Activated CD8-positive, alpha-beta T cell treated with anti-CD3 and anti-CD28 coated beads for 36 hours (primary cell): ENCODE measurements at regions of chr1 and their contacts with region 1.

Region 1: DNA sequence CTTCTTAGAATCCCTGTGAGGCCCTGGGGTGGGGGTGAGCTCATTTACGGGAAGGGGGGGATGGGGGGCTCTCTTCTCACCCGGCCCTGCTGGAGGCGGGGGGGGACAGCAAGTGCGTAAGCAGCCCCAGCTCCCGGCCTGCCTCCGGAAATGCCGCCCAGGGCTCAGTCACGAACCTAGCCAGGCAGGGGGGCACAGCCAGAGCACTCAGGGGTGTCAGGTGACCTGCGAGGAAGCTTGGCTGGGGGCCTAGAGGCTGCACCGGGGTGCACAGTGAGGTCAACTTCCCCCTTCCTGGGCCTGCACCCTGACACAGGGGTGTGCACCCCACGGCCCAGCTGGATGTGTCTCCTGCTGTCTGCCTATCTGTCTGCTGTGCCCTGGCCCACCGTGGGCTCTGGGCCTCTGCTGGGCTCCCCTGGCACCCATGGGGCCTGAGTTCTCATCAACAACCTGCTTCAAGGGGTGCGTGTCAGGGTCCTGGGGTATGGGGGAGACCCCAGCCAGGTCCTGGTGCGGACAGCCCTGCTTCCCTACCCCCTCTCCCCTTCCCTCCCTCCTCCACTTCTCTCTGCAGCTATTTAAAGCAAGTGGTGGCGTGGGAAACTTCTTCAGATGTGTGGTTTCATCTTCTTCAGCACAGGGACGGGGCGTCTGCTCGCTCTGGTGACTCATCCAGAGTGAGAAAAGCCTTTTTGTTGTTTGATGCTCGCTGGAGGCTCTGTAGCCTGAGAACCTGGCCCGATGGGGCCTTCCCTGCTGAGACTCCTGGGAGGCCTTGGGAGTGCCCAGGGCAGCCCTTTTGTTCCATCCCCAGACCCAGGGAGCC is 92.5 kb upstream of the RUNX3 start:
- DNase-seq: peak; percentile 99
- ATAC-seq: peak; percentile 84
- H3K4me3 Mint-ChIP-seq: peak overlapping the region; percentile 75
- H3K27ac Mint-ChIP-seq: peak overlapping the region; percentile 94
- H3K4me1 Mint-ChIP-seq: peaks cover 91% of the 10 kb centered on the region
- H3K27me3 Mint-ChIP-seq: no peaks in the 10 kb centered on the region
- CTCF ChIP-seq: no peak

Region 2: GRCh38 chr1:24978383-24979032 is 44.1 kb before region 1 on chr1:
- CTCF ChIA-PET with region 1: interaction called, 3 read pairs
- POLR2A ChIA-PET with region 1: interaction called, 12 read pairs
- intact Hi-C with region 1: no loop called
- DNase-seq: no peak
- ATAC-seq: peak; percentile 55
- H3K4me3 Mint-ChIP-seq: peak overlapping the region; percentile 12
- H3K27ac Mint-ChIP-seq: peak overlapping the region; percentile 59
- H3K4me1 Mint-ChIP-seq: peaks cover 72% of the 10 kb centered on the region
- H3K27me3 Mint-ChIP-seq: no peaks in the 10 kb centered on the region
- CTCF ChIP-seq: no peak

Region 3: GRCh38 chr1:24987875-24988557 is 34.6 kb before region 1 on chr1:
- CTCF ChIA-PET with region 1: interaction called, 5 read pairs
- POLR2A ChIA-PET with region 1: interaction called, 120 read pairs
- intact Hi-C with region 1: no loop called
- DNase-seq: peak; percentile 83
- ATAC-seq: peak; percentile 76
- H3K4me3 Mint-ChIP-seq: no peak overlapping the region
- H3K27ac Mint-ChIP-seq: peak overlapping the region; percentile 82
- H3K4me1 Mint-ChIP-seq: peaks cover 95% of the 10 kb centered on the region
- H3K27me3 Mint-ChIP-seq: no peaks in the 10 kb centered on the region
- CTCF ChIP-seq: no peak

Region 4: DNA sequence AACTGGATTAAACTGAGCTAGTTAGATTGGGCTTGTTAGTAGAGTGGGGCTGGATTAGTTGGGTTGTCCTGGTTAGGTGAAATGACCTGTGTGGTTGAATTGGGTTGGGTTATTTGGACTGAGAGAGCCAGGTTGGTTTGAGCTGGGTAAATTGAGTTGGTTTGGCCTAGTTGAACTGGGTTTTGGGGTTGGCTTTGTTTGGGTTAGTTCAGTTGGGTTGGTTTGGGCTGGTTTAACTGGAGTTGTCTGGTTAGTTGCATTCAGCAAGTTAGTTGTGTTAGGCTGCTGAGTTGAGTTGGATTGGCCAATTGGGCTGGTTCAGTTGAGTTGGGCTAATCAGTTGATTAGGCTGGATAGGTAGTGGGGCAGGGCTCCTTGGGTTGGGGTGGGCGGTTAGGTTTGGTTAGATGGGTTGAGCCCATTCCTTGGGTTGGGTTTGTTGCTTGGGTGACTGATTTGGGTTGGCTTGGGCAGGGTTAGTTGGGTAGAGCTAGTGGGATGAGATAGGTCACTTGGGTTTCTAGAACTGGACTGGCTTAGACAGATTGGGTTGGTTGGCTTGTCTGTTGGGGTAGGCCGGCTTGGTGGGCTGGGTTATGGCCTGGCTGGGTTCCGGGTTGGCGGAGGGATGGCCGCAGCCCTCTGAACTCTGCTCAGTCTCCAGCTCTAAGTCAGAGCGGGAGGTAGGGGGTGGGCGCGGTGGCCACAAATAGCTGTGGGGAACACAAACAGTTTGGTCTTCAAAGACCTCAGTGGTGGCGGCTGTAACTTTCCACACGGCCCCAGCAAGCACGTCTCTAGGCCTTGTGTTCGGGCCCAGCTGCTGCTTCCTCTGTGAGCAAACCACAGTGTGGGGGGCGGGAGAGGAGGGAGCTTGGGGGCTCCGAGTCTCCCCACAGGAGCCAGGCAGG is 25.3 kb before region 1 on chr1:
- CTCF ChIA-PET with region 1: interaction called, 5 read pairs
- POLR2A ChIA-PET with region 1: interaction called, 120 read pairs
- intact Hi-C with region 1: no loop called
- DNase-seq: peak; percentile 99
- ATAC-seq: peak; percentile 74
- H3K4me3 Mint-ChIP-seq: peak overlapping the region; percentile 73
- H3K27ac Mint-ChIP-seq: peak overlapping the region; percentile 97
- H3K4me1 Mint-ChIP-seq: peaks cover 92% of the 10 kb centered on the region
- H3K27me3 Mint-ChIP-seq: no peaks in the 10 kb centered on the region
- CTCF ChIP-seq: no peak

Region 5: DNA sequence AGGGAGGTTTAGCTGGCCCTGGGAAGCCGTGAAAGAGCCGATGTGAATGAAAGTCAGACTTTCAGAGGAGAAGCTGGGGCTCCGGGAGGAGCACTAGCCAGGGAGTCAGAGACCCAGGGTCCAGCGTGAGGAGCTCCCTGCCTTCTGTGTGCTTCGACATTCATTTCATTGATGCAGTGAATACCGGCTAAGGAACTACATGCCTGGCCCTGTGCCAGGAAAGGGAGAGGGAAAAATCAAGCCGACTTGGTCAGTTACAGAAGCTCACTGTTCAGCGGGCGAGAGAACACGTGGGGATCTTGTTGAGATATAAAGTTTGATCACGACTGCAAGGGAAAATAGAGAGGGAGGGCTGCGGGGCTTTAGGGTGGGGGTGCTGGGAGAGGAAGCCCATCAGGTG is 15.8 kb before region 1 on chr1:
- CTCF ChIA-PET with region 1: interaction called, 4 read pairs
- POLR2A ChIA-PET with region 1: interaction called, 55 read pairs
- intact Hi-C with region 1: no loop called
- DNase-seq: no peak
- ATAC-seq: no peak
- H3K4me3 Mint-ChIP-seq: no peak overlapping the region
- H3K27ac Mint-ChIP-seq: peak overlapping the region; percentile 74
- H3K4me1 Mint-ChIP-seq: peaks cover 86% of the 10 kb centered on the region
- H3K27me3 Mint-ChIP-seq: no peaks in the 10 kb centered on the region
- CTCF ChIP-seq: no peak